ENCODE measurements at regions of chr19 and their contacts with region 1.

Region 1: DNA sequence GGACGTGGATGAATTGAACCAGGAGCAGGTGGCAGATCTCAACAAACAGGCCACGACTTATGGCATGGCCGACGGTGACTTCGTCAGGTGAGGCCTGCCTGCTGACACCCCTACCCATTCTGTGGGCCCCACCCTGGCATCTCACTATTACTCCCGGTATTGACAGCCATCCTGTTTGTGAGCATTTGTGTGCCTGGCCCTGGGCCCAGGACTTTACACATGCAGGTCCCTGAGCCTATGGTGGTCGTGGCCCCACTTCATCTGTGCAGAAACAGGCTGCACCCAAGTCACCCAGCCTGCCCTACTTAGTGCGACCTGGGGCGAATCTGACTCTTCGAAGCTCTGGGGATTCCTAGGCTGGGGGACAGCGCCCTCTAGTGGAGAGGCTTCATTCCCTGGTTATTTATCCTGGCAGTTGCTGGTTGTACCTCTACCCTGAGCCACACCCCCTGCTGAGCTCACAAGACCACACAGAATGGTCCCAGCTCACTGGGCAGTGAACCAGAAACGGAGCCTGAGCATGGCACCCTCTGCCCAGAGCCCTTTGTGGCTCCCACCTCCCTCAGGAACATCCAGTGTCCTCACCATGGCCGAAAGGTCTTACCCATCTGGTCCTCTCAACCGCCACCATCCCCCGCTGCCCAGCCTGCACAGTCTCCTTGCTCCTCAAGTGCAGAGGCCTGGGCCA is 16.9 kb downstream of the ZNF296 start:
- DNase-seq: peak; percentile 73 to 92 (median 85)
- ATAC-seq: peak; percentile 90
- H3K4me3 ChIP-seq: no peak overlapping the region
- H3K4me3 Mint-ChIP-seq: no peak overlapping the region
- H3K27ac ChIP-seq: no peak overlapping the region
- H3K27ac Mint-ChIP-seq: peak overlapping the region; percentile 41
- H3K4me1 ChIP-seq: no peaks in the 10 kb centered on the region
- H3K4me1 Mint-ChIP-seq: peaks cover 3% of the 10 kb centered on the region
- H3K27me3 ChIP-seq: no peaks in the 10 kb centered on the region
- H3K27me3 Mint-ChIP-seq: no peaks in the 10 kb centered on the region
- CTCF ChIP-seq: peak; percentile 81

Region 2: GRCh38 chr19:44800461-44800860 is 259.0 kb before region 1 on chr19:
- CTCF ChIA-PET with region 1: no interaction called
- POLR2A ChIA-PET with region 1: no interaction called
- intact Hi-C with region 1: loop called in 1 of 2 experiments (anchors 10 kb)
- DNase-seq: peak; percentile 71 to 88 (median 79)
- ATAC-seq: peak; percentile 92
- H3K4me3 ChIP-seq: no peak overlapping the region
- H3K4me3 Mint-ChIP-seq: no peak overlapping the region
- H3K27ac ChIP-seq: no peak overlapping the region
- H3K27ac Mint-ChIP-seq: no peak overlapping the region
- H3K4me1 ChIP-seq: peaks cover 21% of the 10 kb centered on the region
- H3K4me1 Mint-ChIP-seq: peaks cover 12% of the 10 kb centered on the region
- H3K27me3 ChIP-seq: no peaks in the 10 kb centered on the region
- H3K27me3 Mint-ChIP-seq: peaks cover 3% of the 10 kb centered on the region
- CTCF ChIP-seq: peak; percentile 70

Region 3: DNA sequence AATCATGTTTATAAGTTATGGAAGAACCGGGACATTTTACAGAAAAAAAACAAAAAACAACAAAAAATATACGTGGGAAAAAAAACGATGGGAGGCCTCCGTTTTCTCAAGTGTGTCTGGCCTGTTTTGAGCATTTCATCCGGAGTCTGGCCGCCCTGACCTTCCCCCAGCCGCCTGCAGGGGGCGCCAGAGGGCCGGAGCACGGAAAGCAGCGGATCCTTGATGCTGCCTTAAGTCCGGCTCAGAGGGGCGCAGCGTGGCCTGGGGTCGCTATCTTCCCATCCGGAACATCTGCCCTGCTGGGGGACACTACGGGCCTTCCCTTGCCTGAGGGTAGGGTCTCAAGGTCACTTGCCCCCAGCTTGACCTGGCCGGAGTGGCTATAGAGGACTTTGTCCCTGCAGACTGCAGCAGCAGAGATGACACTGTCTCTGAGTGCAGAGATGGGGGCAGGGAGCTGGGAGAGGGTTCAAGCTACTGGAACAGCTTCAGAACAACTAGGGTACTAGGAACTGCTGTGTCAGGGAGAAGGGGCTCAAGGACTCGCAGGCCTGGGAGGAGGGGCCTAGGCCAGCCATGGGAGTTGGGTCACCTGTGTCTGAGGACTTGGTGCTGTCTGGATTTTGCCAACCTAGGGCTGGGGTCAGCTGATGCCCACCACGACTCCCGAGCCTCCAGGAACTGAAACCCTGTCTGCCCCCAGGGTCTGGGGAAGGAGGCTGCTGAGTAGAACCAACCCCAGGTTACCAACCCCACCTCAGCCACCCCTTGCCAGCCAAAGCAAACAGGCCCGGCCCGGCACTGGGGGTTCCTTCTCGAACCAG is 155.6 kb before region 1 on chr19:
- CTCF ChIA-PET with region 1: interaction called, 8 read pairs
- POLR2A ChIA-PET with region 1: no interaction called
- intact Hi-C with region 1: loop called (anchors 1 kb)
- DNase-seq: peak; percentile 55 to 85 (median 71)
- ATAC-seq: peak; percentile 73
- H3K4me3 ChIP-seq: no peak overlapping the region
- H3K4me3 Mint-ChIP-seq: no peak overlapping the region
- H3K27ac ChIP-seq: no peak overlapping the region
- H3K27ac Mint-ChIP-seq: no peak overlapping the region
- H3K4me1 ChIP-seq: peaks cover 12% of the 10 kb centered on the region
- H3K4me1 Mint-ChIP-seq: peaks cover 12% of the 10 kb centered on the region
- H3K27me3 ChIP-seq: peaks cover 7 to 25% of the 10 kb centered on the region in 2 experiments
- H3K27me3 Mint-ChIP-seq: peaks cover 23% of the 10 kb centered on the region
- CTCF ChIP-seq: peak; percentile 94

Region 4: GRCh38 chr19:44974857-44975256 is 84.6 kb before region 1 on chr19:
- CTCF ChIA-PET with region 1: no interaction called
- POLR2A ChIA-PET with region 1: no interaction called
- intact Hi-C with region 1: no loop called
- DNase-seq: no peak
- ATAC-seq: no peak
- H3K4me3 ChIP-seq: no peak overlapping the region
- H3K4me3 Mint-ChIP-seq: no peak overlapping the region
- H3K27ac ChIP-seq: no peak overlapping the region
- H3K27ac Mint-ChIP-seq: no peak overlapping the region
- H3K4me1 ChIP-seq: no peaks in the 10 kb centered on the region
- H3K4me1 Mint-ChIP-seq: no peaks in the 10 kb centered on the region
- H3K27me3 ChIP-seq: no peaks in the 10 kb centered on the region
- H3K27me3 Mint-ChIP-seq: no peaks in the 10 kb centered on the region
- CTCF ChIP-seq: no peak

Region 5: GRCh38 chr19:44988896-44989556 is 70.4 kb before region 1 on chr19:
- CTCF ChIA-PET with region 1: interaction called, 23 read pairs
- POLR2A ChIA-PET with region 1: no interaction called
- intact Hi-C with region 1: loop called (anchors 1 kb)
- DNase-seq: peak; percentile 34 to 78 (median 65)
- ATAC-seq: peak; percentile 91
- H3K4me3 ChIP-seq: no peak overlapping the region
- H3K4me3 Mint-ChIP-seq: no peak overlapping the region
- H3K27ac ChIP-seq: no peak overlapping the region
- H3K27ac Mint-ChIP-seq: peak overlapping the region; percentile 33
- H3K4me1 ChIP-seq: no peaks in the 10 kb centered on the region
- H3K4me1 Mint-ChIP-seq: no peaks in the 10 kb centered on the region
- H3K27me3 ChIP-seq: no peaks in the 10 kb centered on the region
- H3K27me3 Mint-ChIP-seq: no peaks in the 10 kb centered on the region
- CTCF ChIP-seq: peak; percentile 37

Region 6: DNA sequence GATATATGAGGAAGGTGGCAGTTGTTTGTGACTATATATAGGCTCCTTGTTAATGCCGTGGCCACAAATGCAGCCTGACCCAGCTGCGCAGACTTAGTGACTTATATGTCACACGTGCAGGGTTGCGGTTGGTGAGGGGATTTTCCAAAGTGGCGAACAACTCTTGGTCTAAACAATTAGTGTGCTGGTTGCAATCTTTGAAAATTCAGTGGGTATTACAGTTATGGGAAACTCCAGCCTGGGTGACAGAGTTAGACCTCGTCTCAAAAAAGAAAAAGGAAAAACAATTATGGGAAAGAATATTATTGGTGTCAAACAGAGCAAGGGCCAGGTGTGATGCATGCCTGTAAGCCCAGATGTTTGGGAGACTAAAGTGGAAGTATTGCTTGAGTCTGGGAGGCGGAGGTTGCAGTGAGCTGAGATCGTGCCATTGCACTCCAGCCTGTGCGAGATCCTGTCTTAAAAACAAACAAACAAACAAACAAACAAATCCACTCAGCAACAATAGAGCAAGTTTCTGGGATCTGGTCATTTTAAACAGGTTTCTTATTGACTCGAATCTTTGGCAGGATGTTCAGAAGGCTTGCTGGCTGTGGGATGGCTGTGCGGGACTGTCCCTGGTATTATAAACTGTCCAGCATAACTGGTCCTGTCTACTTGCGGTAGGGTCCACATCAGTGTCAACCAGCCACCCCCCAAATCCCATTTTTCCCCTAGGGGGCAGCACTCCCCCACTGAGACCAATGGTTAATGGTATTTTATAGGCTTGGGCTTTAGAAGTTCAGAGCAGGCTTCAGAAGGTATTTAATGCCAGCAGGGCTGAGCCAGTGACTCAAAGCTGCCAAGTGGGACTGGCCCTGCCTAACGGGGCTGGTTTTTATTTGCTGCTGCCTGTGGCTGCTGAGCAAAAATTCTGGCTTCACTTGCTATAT is 42.8 kb before region 1 on chr19:
- CTCF ChIA-PET with region 1: interaction called, 4 read pairs
- POLR2A ChIA-PET with region 1: no interaction called
- intact Hi-C with region 1: loop called (anchors 1 to 2 kb)
- DNase-seq: peak; percentile 54 to 95 (median 73)
- ATAC-seq: peak; percentile 85
- H3K4me3 ChIP-seq: peak overlapping the region in 1 of 2 experiments; percentile 9
- H3K4me3 Mint-ChIP-seq: peak overlapping the region; percentile 42
- H3K27ac ChIP-seq: peak overlapping the region; percentile 44 to 82
- H3K27ac Mint-ChIP-seq: peak overlapping the region; percentile 87
- H3K4me1 ChIP-seq: peaks cover 3% of the 10 kb centered on the region
- H3K4me1 Mint-ChIP-seq: peaks cover 13% of the 10 kb centered on the region
- H3K27me3 ChIP-seq: no peaks in the 10 kb centered on the region
- H3K27me3 Mint-ChIP-seq: no peaks in the 10 kb centered on the region
- CTCF ChIP-seq: peak; percentile 68

Region 7: GRCh38 chr19:45047188-45047797 is 12.1 kb before region 1 on chr19:
- CTCF ChIA-PET with region 1: interaction called, 16 read pairs
- POLR2A ChIA-PET with region 1: no interaction called
- intact Hi-C with region 1: no loop called
- DNase-seq: no peak
- ATAC-seq: peak; percentile 71
- H3K4me3 ChIP-seq: no peak overlapping the region
- H3K4me3 Mint-ChIP-seq: no peak overlapping the region
- H3K27ac ChIP-seq: no peak overlapping the region
- H3K27ac Mint-ChIP-seq: peak overlapping the region; percentile 57
- H3K4me1 ChIP-seq: peaks cover 18% of the 10 kb centered on the region
- H3K4me1 Mint-ChIP-seq: peaks cover 45% of the 10 kb centered on the region
- H3K27me3 ChIP-seq: no peaks in the 10 kb centered on the region
- H3K27me3 Mint-ChIP-seq: no peaks in the 10 kb centered on the region
- CTCF ChIP-seq: no peak

Region 8: GRCh38 chr19:45079063-45079910 is 19.9 kb after region 1 on chr19 and contains the start of gene GEMIN7:
- CTCF ChIA-PET with region 1: interaction called, 5 read pairs
- POLR2A ChIA-PET with region 1: no interaction called
- intact Hi-C with region 1: loop called in 1 of 2 experiments (anchors 1 kb)
- DNase-seq: peak; percentile 64 to 89 (median 76)
- ATAC-seq: peak; percentile 70
- H3K4me3 ChIP-seq: peak within 1 kb of the TSS; percentile 95 to 98
- H3K4me3 Mint-ChIP-seq: peak within 1 kb of the TSS; percentile 90
- H3K27ac ChIP-seq: peak within 1 kb of the TSS; percentile 77 to 78
- H3K27ac Mint-ChIP-seq: peak within 1 kb of the TSS; percentile 81
- H3K4me1 ChIP-seq: peaks cover 46% of the 10 kb centered on the region
- H3K4me1 Mint-ChIP-seq: peaks cover 45% of the 10 kb centered on the region
- H3K27me3 ChIP-seq: no peaks in the 10 kb centered on the region
- H3K27me3 Mint-ChIP-seq: no peaks in the 10 kb centered on the region
- CTCF ChIP-seq: no peak
- total RNA-seq, gene GEMIN7: 7.2 to 7.7 TPM

Measured in CD8-positive, alpha-beta T cell (primary cell).